ENCODE measurements at regions of chr1 and their contacts with region 1.

Region 1: DNA sequence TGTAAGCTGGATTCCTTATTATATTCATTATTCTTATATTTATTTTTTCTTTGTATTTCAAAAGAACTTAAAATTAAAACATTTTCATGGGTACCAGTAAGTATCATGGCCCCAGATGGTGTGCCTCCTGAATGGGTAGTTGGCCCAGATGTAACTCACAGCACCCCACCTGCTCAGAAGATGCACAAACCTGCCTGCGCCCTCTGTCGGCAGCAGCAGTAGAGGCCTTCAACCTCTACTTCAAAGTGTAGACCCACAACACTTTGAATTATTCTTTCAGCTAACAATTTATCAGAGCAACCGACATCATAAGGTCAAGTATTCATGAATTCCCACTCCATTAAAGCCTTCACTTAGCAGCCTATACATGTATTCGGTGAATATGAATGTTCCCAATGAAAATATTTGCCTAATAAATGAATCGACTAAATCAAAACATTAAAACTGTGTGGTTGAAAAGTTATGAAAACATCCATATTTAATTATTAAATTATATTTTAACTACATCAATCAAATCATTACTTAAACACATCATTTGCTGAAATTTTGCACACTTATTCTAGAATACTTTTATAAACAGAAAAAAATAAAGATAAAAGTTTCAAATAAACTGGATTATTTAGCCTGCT is 25.4 kb downstream of the PIGM start:
- DNase-seq: peak; percentile 73
- H3K4me3 ChIP-seq: no peak overlapping the region; a peak in 1 of 4 replicates
- H3K27ac ChIP-seq: no peak overlapping the region
- H3K4me1 ChIP-seq: no peaks in the 10 kb centered on the region
- H3K27me3 ChIP-seq: peaks cover 8% of the 10 kb centered on the region; the same call in 1 of the 2 replicates
- CTCF ChIP-seq: peak; percentile 98
- EP300 ChIP-seq: no peak
- RAD21 ChIP-seq: peak; percentile 66

Region 2: GRCh38 chr1:159872881-159873280 is 133.5 kb before region 1 on chr1:
- CTCF ChIA-PET with region 1: interaction called, 15 read pairs
- POLR2A ChIA-PET with region 1: no interaction called
- DNase-seq: no peak
- H3K4me3 ChIP-seq: no peak overlapping the region
- H3K27ac ChIP-seq: no peak overlapping the region
- H3K4me1 ChIP-seq: peaks cover 5 to 9% of the 10 kb centered on the region in 2 experiments; a peak in 1 of 4 replicates
- H3K27me3 ChIP-seq: no peaks in the 10 kb centered on the region
- CTCF ChIP-seq: no peak
- EP300 ChIP-seq: no peak
- RAD21 ChIP-seq: no peak

Region 3: GRCh38 chr1:159916184-159917051 is 90.0 kb before region 1 on chr1:
- CTCF ChIA-PET with region 1: interaction called, 460 read pairs
- POLR2A ChIA-PET with region 1: no interaction called
- DNase-seq: peak; percentile 58
- H3K4me3 ChIP-seq: no peak overlapping the region
- H3K27ac ChIP-seq: peak overlapping the region in 1 of 2 experiments; percentile 97; a peak in 2 of 4 replicates
- H3K4me1 ChIP-seq: peaks cover 14 to 64% of the 10 kb centered on the region in 2 experiments; a peak in 3 of 4 replicates
- H3K27me3 ChIP-seq: no peaks in the 10 kb centered on the region
- CTCF ChIP-seq: no peak
- EP300 ChIP-seq: peak in 1 of 2 experiments; percentile 38; a peak in 1 of 4 replicates
- RAD21 ChIP-seq: no peak

Region 4: GRCh38 chr1:159960721-159961381 is 45.6 kb before region 1 on chr1:
- CTCF ChIA-PET with region 1: interaction called, 100 read pairs
- POLR2A ChIA-PET with region 1: no interaction called
- DNase-seq: no peak
- H3K4me3 ChIP-seq: no peak overlapping the region; a peak in 1 of 4 replicates
- H3K27ac ChIP-seq: peak overlapping the region in 1 of 2 experiments; percentile 12; a peak in 1 of 4 replicates
- H3K4me1 ChIP-seq: no peaks in the 10 kb centered on the region
- H3K27me3 ChIP-seq: peaks cover 17% of the 10 kb centered on the region; the same call in 1 of the 2 replicates
- CTCF ChIP-seq: no peak
- EP300 ChIP-seq: no peak
- RAD21 ChIP-seq: no peak

Region 5: DNA sequence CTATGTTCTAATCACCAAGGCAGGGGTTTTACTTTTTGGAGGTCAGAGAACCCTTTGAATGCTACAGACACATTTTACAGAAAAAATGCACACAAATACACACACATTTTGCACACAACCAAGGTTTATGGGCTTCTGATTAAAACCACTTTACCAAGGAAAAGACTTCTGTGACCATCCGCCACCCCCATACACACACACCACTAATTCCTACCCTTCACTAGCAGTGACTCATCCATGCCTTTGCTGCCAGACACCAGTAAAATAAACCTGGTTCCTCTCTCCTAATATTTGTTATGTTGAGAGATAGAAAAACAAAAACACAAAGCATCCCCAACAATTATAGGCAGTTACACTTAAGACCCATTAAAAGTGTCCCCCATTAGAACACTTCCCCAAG is 12.5 kb after region 1 on chr1:
- CTCF ChIA-PET with region 1: interaction called, 96 read pairs
- POLR2A ChIA-PET with region 1: no interaction called
- DNase-seq: no peak
- H3K4me3 ChIP-seq: no peak overlapping the region
- H3K27ac ChIP-seq: peak overlapping the region in 1 of 2 experiments; percentile 29; a peak in 1 of 4 replicates
- H3K4me1 ChIP-seq: peaks cover 5 to 12% of the 10 kb centered on the region in 2 experiments; a peak in 3 of 4 replicates
- H3K27me3 ChIP-seq: no peaks in the 10 kb centered on the region
- CTCF ChIP-seq: no peak
- EP300 ChIP-seq: no peak
- RAD21 ChIP-seq: no peak

Measured in SK-N-SH (cell line).